Psoas muscle (tissue), 8 donors: ENCODE measurements at regions of chr5 and their contacts with region 1.

Region 1: GRCh38 chr5:149114403-149115312 is 26.6 kb upstream of the ABLIM3 start:
- DNase-seq: peak in 1 of 2 donors; percentile 57
- ATAC-seq: peak; percentile 88 to 98 (median 94)
- H3K4me3 ChIP-seq: no peak overlapping the region
- H3K27ac ChIP-seq: no peak overlapping the region
- H3K4me1 ChIP-seq: no peaks in the 10 kb centered on the region
- H3K27me3 ChIP-seq: no peaks in the 10 kb centered on the region
- CTCF ChIP-seq: peak; percentile 79

Region 2: DNA sequence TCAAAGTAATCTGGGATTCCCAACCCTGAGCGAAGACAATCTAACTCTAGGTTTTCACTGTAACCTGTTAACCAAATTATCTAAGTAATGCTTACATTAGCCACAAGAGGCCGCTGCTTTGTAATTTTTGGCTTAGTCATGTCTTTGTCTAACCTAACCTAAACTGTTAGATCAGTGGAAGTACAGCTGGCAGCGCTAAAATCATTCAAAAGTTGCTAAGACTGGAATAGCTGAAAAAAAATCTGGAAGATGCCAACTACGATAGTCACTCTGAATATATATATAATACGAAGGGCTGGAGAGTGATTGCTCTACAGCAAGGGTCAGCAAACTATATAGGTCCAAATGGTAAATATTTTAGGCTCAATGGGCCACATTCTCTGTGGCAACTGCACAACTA is 670.7 kb before region 1 on chr5:
- intact Hi-C with region 1: loop called in 1 of 2 experiments (anchors 5 kb)
- DNase-seq: no peak
- ATAC-seq: peak; percentile 74 to 96 (median 86)
- H3K4me3 ChIP-seq: no peak overlapping the region
- H3K27ac ChIP-seq: no peak overlapping the region
- H3K4me1 ChIP-seq: peaks cover 4% of the 10 kb centered on the region
- H3K27me3 ChIP-seq: no peaks in the 10 kb centered on the region
- CTCF ChIP-seq: peak; percentile 80

Region 3: GRCh38 chr5:149063017-149063687 is 51.5 kb before region 1 on chr5 and contains the start of gene SH3TC2:
- intact Hi-C with region 1: no loop called
- DNase-seq: peak in 1 of 2 donors; percentile 54
- ATAC-seq: peak; percentile 13 to 52 (median 42)
- H3K4me3 ChIP-seq: no peak within 1 kb of the TSS
- H3K27ac ChIP-seq: peak within 1 kb of the TSS; percentile 25
- H3K4me1 ChIP-seq: peaks cover 12% of the 10 kb centered on the region
- H3K27me3 ChIP-seq: no peaks in the 10 kb centered on the region
- CTCF ChIP-seq: no peak
- total RNA-seq, gene SH3TC2: 0.34 to 1.9 (median 1.0) TPM

Region 4: DNA sequence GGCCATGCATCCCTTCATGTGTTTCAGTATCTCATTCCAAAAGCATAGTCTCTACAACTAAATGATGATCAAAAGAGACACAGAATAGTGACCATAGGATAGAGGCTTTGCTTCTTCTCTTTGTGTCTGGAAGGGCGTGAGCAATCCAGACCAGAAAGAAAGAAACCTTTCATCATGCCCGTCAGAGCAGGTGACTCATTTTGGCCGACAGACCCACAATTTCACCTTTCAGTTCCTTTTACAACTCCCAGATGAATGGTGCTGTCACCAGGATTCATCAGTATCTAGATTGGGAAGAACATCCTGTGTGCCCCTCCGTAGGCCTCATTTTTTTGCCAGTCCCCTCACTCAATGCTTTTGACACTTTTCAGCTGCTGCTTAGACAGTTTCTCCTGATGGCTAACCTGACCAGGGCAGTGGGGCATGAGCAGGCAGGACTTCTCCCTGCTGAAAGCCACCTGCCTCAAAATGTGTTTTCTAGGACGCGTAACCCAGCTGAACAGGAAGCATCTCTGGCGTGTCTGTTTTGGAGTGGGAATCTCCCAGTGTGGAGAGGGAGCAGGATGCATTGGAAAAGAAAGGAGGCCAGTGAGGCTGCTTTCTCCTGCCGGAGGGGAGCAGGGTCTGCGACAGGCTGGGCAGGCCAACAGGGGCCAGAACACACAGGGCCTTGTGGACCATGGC is 47.9 kb after region 1 on chr5:
- intact Hi-C with region 1: no loop called
- DNase-seq: no peak
- ATAC-seq: peak in 3 of 4 donors; percentile 17 to 73 (median 27)
- H3K4me3 ChIP-seq: no peak overlapping the region
- H3K27ac ChIP-seq: no peak overlapping the region
- H3K4me1 ChIP-seq: peaks cover 13% of the 10 kb centered on the region
- H3K27me3 ChIP-seq: no peaks in the 10 kb centered on the region
- CTCF ChIP-seq: no peak

Region 5: DNA sequence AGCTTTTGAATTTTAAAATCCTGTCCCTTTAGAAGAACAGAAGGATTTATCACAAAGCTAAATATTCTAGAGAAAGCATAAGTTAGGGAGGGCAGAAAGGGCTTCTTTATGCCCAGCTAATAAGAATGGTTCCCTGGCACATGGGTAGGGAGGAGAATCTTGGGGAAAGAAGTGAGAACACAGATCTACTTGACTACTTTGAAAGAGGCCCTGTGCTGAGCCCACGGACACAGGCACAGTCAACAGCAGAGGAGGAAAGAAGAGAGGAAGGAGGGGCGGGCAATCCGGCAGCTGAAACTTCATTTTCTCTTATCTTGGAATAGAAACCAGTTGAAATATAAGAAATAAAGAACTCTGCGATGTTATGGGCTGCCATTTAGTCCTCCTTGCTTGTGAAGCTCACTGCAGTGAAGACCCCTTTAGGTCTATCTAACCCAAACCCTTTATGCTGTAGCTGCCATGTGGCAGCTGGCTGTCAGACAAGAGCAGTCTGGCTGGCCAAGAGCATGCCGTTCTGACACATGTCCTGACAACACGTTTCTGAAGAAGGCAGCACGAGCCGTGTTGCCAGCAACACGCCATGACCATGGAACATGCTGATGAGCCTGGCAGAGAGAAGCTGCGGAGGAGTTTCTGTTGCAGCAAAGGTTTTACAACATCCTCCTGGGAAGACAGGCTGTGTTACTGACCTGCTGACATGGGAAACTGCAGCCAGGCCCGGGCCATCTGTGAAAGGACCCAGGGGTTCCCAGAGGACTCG is 60.9 kb after region 1 on chr5:
- intact Hi-C with region 1: no loop called
- DNase-seq: peak; percentile 60 to 89
- ATAC-seq: peak; percentile 67 to 94 (median 90)
- H3K4me3 ChIP-seq: no peak overlapping the region
- H3K27ac ChIP-seq: peak overlapping the region; percentile 81
- H3K4me1 ChIP-seq: peaks cover 56% of the 10 kb centered on the region
- H3K27me3 ChIP-seq: no peaks in the 10 kb centered on the region
- CTCF ChIP-seq: no peak

Region 6: GRCh38 chr5:149188383-149188782 is 73.7 kb after region 1 on chr5:
- intact Hi-C with region 1: no loop called
- DNase-seq: no peak
- ATAC-seq: no peak
- H3K4me3 ChIP-seq: no peak overlapping the region
- H3K27ac ChIP-seq: no peak overlapping the region
- H3K4me1 ChIP-seq: no peaks in the 10 kb centered on the region
- H3K27me3 ChIP-seq: no peaks in the 10 kb centered on the region
- CTCF ChIP-seq: no peak